Transverse colon (tissue), 4 donors: ENCODE measurements at regions of chr2 and their contacts with region 1.

Region 1: GRCh38 chr2:120914839-120915521 is 179.3 kb downstream of the GLI2 start:
- DNase-seq: peak; percentile 56
- H3K4me3 ChIP-seq: no peak overlapping the region
- H3K27ac ChIP-seq: peak overlapping the region in 1 of 4 donors; percentile 42
- H3K4me1 ChIP-seq: peaks cover 7 to 38% (median 26%) of the 10 kb centered on the region in 4 donors
- H3K27me3 ChIP-seq: no peaks in the 10 kb centered on the region
- CTCF ChIP-seq: no peak
- EP300 ChIP-seq: no peak
- POLR2A ChIP-seq: no peak

Region 2: GRCh38 chr2:120836281-120836680 is 78.7 kb before region 1 on chr2:
- in situ Hi-C with region 1: no loop called
- intact Hi-C with region 1: loop called (anchors 2 kb)
- DNase-seq: no peak
- H3K4me3 ChIP-seq: no peak overlapping the region
- H3K27ac ChIP-seq: no peak overlapping the region
- H3K4me1 ChIP-seq: no peaks in the 10 kb centered on the region
- H3K27me3 ChIP-seq: no peaks in the 10 kb centered on the region
- CTCF ChIP-seq: no peak
- EP300 ChIP-seq: no peak
- POLR2A ChIP-seq: no peak

Region 3: DNA sequence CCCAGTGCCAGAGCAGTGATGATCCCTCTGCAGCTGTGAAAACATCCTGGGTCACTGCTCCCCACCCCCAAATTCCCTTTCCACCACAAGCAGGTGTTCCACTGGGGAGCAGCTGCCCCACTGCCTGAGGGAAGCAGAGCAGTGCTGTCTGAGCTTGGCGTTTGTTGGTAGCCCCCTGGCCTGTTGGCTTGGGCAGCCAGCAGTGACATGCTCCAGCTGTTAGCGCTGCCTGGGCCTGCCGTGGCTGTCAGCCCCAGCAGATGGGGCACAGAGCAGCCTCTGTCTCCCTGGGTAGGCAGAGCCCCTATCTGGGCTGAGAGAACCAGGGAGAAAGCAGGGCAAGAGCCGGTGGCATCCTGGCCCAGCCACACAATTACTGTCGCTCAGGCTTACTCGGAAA is 68.4 kb after region 1 on chr2:
- in situ Hi-C with region 1: no loop called
- intact Hi-C with region 1: no loop called
- DNase-seq: no peak
- H3K4me3 ChIP-seq: no peak overlapping the region
- H3K27ac ChIP-seq: no peak overlapping the region
- H3K4me1 ChIP-seq: no peaks in the 10 kb centered on the region
- H3K27me3 ChIP-seq: no peaks in the 10 kb centered on the region
- CTCF ChIP-seq: no peak
- EP300 ChIP-seq: no peak
- POLR2A ChIP-seq: no peak